ENCODE measurements at regions of chr15 and their contacts with region 1.

Region 1: DNA sequence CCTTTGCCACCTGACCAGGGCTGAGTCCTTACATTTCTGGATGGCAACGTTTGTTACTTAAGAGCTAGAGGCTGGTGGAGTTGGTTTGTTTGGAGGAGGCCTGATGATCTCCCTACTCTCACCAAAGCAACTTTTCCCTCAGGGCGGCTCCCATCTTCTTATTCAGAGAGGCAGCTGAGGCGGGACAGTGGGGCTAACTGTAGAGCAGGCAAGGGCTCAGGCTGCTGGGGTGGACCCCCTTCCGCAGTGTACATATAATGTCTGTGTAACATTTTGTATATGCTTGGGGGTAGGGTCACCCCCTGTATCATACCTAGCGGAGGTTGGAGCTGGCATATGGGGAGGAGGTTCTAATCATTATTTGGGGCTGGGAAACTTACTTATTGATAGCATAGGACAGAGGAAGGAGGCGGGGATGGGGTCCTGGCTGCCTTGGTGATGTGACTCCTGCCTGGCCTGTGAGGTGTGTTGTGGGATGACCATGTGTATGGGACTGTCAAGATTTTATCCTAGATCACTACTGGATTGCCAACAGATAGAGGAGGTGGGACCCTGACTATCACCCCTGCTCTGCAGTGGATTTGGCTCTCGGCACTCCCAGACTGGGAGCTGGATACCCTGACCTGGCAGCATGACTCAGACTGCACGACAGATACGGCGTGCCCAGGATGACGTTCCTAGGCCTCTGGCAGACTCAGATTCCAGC is 52.5 kb upstream of the UBE2Q2 start:
- DNase-seq: no peak
- H3K4me3 ChIP-seq: no peak overlapping the region
- H3K27ac ChIP-seq: no peak overlapping the region
- H3K4me1 ChIP-seq: no peaks in the 10 kb centered on the region
- H3K27me3 ChIP-seq: peaks cover 52% of the 10 kb centered on the region
- CTCF ChIP-seq: no peak

Region 2: DNA sequence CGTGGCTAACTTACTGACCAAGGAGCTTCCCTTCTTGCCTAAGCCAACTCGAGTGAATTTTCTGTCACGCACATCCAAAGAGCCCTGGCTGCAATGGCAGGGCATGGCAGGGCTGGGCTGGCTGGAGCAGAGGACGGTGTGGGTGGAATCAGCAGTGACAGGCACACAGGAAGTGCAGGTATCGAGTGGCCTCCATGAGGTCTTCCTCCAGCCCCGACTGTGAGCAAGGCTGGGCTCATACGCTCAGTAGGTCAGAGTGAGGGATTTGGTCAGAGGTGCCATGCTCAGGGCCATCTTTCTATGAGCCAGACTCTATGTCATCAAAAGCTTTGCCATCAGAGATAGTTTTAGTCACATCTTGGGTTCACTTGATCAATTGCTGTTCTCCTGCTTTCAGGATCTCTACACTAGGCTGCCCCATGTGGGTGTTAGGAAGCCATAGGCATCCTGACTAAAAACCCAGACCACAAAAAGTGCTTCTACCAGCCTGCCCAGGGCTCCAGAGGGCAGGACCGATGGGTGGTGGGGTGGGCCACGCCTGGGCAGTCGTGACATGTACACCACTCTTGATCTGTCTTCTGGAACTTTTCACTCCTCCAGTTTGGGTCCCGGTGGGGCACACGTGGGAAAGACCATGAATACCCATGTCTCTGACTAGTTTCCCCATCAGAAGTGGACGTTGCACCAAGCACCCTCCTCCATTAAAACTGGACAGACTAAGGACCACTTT is 477.5 kb before region 1 on chr15:
- intact Hi-C with region 1: no loop called
- DNase-seq: no peak
- H3K4me3 ChIP-seq: no peak overlapping the region
- H3K27ac ChIP-seq: no peak overlapping the region
- H3K4me1 ChIP-seq: no peaks in the 10 kb centered on the region
- H3K27me3 ChIP-seq: peaks cover 29% of the 10 kb centered on the region
- CTCF ChIP-seq: no peak

Region 3: DNA sequence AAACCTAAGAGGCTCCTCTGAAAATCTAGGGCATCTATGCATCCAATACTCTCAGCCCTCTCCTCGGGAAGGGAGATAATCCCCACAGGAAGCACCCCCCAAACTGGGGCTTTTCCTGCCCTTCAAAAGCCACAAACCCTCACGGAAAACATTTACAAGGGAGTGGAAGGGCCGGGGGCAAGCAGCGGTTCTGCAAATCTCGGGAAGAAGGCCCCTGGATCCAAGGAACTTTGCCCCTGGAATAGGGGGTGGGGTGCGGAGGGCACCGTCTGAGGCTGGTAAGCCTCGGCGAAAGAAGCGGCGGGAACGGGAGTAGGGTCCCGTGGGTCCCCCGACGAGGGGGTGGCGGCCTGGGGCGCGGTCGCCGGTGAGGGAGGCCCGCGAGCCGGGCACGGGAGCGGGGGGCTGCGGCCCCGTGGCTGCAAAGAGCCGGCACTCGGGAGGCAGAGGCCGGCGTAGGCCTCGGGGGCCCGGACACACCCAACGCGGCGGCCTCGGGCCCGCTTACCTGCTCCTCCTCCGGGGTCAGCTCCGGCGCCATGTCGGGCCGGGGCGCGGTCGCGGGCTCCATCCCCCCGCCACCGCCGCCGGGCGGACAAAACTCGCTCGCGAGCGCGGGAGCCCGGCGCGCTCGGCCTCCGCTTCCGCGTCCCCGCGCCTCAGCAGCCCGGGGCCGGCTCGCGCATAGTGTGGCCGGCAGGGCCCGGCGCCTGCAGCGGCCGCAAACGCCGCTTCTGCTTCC is 212.4 kb before region 1 on chr15:
- intact Hi-C with region 1: no loop called
- DNase-seq: peak; percentile 27
- H3K4me3 ChIP-seq: peak overlapping the region; percentile 95
- H3K27ac ChIP-seq: peak overlapping the region; percentile 93
- H3K4me1 ChIP-seq: peaks cover 56% of the 10 kb centered on the region
- H3K27me3 ChIP-seq: no peaks in the 10 kb centered on the region
- CTCF ChIP-seq: no peak

Region 4: GRCh38 chr15:75625542-75626347 is 165.0 kb before region 1 on chr15 and contains the start of gene SNUPN:
- intact Hi-C with region 1: no loop called
- DNase-seq: peak; percentile 95
- H3K4me3 ChIP-seq: peak within 1 kb of the TSS; percentile 78
- H3K27ac ChIP-seq: peak within 1 kb of the TSS; percentile 96
- H3K4me1 ChIP-seq: peaks cover 31% of the 10 kb centered on the region
- H3K27me3 ChIP-seq: no peaks in the 10 kb centered on the region
- CTCF ChIP-seq: no peak
- total RNA-seq, gene SNUPN: 19.5 TPM

Region 5: GRCh38 chr15:75738647-75739331 is 52.0 kb before region 1 on chr15:
- intact Hi-C with region 1: loop called (anchors 10 kb)
- DNase-seq: peak; percentile 95
- H3K4me3 ChIP-seq: peak overlapping the region; percentile 88
- H3K27ac ChIP-seq: peak overlapping the region; percentile 30
- H3K4me1 ChIP-seq: peaks cover 21% of the 10 kb centered on the region
- H3K27me3 ChIP-seq: no peaks in the 10 kb centered on the region
- CTCF ChIP-seq: no peak